Breast epithelium (tissue), 4 donors: ENCODE measurements at regions of chr14 and their contacts with region 1.

Region 1: DNA sequence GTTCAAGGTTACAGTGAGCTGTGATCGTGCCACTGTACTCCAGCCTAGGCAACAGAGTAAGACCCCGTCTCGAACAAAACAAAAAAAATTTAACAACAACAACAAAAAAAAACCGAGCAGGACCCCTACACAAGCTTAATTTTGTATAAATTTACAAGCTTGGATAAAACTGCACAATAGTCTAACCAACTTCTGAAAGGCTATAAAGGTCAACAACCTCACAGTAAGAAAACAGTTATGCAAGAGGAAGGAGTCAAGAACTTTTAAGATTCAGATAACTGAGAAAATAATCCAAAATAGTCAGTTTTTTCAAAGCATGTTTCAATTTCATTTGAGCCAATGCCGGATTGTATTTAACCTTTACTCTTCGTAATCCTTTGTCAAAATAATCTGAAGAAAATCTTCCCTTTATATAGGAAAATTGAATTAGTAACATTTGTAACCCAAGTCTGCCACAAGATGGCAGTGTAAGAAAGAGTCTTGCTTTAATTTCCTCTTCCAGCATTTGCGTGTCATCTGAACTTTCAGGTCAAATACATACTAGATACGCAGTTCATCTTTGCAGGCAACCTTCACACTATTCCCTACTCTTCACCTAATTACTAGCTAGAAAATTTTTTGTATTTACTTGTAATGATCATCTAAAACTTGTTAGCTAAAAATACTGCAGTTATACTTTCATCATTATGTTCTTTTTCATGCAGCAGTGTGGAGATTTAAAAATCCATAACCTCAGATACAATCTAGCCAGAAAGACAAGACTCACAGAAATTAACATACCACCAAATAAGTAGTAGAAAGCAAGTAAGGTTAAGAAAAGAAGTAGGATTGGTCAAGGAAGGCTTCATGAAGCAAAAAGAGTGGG is 5.8 kb downstream of the CCNB1IP1 start:
- DNase-seq: no peak
- H3K4me3 ChIP-seq: no peak overlapping the region
- H3K27ac ChIP-seq: peak overlapping the region in 1 of 2 donors; percentile 19
- H3K4me1 ChIP-seq: no peaks in the 10 kb centered on the region
- H3K27me3 ChIP-seq: no peaks in the 10 kb centered on the region
- CTCF ChIP-seq: peak; percentile 37 to 70 (median 65)
- POLR2A ChIP-seq: no peak

Region 2: DNA sequence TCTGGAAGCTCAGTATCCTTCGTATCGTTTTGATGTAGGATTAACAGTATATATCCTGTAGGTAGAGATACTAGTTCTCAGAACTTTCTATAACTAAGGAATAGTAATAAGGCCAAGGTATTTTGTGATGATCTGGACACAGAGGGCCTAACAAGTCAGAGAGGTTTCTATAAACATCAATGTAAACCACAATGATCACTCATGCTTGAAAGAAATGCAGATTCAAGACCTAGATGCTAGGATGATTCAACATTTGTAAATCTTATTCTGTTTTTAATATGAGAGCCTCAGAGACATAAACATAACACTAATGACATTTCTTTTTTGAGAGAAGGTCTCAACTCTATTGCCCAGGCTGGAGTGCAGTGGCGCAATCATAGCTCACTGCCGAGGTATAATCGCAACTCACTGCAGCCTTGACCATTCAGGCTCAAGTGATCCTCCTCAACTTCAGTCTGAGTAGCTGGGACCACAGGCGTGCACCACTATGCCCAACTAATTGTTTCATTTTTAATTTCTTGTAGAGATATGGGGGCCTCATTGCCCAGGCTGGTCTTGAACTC is 1040.4 kb after region 1 on chr14:
- intact Hi-C with region 1: loop called (anchors 5 kb)
- DNase-seq: no peak
- H3K4me3 ChIP-seq: no peak overlapping the region
- H3K27ac ChIP-seq: no peak overlapping the region
- H3K4me1 ChIP-seq: no peaks in the 10 kb centered on the region
- H3K27me3 ChIP-seq: no peaks in the 10 kb centered on the region
- CTCF ChIP-seq: no peak
- POLR2A ChIP-seq: no peak

Region 3: DNA sequence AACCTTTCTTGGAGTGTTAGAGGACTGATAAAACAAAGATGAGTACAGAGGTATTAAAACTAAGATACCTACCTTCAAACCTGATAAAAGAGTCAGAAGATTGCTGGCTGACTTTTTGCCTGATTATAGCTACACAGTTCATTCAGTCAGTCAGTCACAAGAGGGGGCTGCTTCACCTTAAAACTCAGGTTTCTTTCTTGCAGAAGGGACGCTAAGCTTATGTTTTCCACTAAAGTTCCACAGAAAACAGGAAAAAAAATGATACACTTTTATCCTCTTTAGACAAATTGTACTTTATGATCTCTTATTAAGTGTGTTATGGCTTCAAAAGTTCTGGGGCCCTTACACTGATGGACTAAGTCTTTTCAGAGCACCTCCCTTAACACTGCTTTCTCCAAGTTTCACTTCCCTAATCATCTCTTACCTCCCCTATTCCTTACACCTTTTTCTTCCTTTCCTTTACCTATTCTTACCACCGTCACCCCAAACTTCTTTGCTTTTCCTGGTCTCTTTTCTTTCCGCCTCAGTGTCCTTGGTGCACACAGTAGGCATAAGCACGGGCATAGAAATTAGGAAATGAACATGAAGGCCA is 1795.1 kb after region 1 on chr14:
- intact Hi-C with region 1: no loop called
- DNase-seq: no peak
- H3K4me3 ChIP-seq: no peak overlapping the region
- H3K27ac ChIP-seq: no peak overlapping the region
- H3K4me1 ChIP-seq: no peaks in the 10 kb centered on the region
- H3K27me3 ChIP-seq: no peaks in the 10 kb centered on the region
- CTCF ChIP-seq: no peak
- POLR2A ChIP-seq: no peak